ENCODE measurements at regions of chr1 and their contacts with region 1.

Region 1: GRCh38 chr1:160328184-160328583 is 14.9 kb downstream of the COPA start:
- DNase-seq: no peak
- H3K4me3 Mint-ChIP-seq: no peak overlapping the region
- H3K27ac Mint-ChIP-seq: no peak overlapping the region
- H3K4me1 Mint-ChIP-seq: no peaks in the 10 kb centered on the region
- H3K27me3 Mint-ChIP-seq: no peaks in the 10 kb centered on the region

Region 2: DNA sequence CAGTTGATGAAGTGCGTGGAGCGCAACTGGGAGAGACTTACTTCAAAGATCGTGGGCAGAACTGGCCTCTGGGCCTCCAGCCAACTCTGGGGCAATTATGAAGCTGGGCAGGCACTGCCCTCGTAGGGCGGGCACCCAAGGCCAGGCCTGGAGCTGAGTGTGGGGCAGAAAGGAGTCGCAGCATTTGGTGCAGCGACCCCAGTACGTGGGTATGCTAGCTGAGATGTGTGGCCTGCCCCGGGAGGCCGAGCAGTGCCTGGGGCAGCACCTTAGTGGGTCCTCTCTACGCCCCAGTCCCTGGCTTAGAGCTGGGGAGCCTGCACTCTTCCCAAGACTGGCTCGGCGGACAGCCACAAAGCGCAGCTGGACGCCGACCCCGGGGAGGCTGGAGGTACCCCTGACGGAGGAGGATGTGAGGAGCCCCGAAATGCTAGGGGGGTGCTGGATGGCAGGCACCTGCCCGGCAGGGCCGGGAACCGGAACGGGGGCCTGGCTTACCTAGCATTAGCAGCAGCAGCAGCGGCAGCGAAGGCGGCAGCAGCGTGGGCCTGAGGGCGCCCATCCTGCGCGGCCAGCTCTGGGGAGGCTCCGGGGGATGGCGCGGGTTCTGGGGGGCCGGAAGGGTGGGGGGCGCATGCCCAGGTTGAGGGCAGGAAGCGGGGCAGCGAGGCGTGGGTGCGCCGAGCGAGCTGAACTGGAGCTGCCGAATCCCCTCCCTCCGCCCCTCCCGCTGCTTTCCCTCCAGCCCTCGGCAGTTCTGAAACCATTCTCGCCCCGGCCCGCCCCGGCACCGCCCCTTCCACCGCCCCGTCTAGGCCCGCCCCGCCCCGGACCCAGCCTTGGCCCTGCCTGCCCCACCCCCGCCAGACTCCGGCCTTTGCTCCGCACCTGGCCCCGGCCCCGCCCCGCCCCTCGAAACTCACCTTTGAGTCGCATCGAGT is 230.0 kb before region 1 on chr1 and contains the start of gene IGSF8:
- intact Hi-C with region 1: no loop called
- DNase-seq: peak; percentile 96
- H3K4me3 Mint-ChIP-seq: peak within 1 kb of the TSS; percentile 89
- H3K27ac Mint-ChIP-seq: peak within 1 kb of the TSS; percentile 79
- H3K4me1 Mint-ChIP-seq: peaks cover 37% of the 10 kb centered on the region
- H3K27me3 Mint-ChIP-seq: no peaks in the 10 kb centered on the region
- total RNA-seq, gene IGSF8: 25.3 and 26.7 TPM in 2 replicates

Region 3: DNA sequence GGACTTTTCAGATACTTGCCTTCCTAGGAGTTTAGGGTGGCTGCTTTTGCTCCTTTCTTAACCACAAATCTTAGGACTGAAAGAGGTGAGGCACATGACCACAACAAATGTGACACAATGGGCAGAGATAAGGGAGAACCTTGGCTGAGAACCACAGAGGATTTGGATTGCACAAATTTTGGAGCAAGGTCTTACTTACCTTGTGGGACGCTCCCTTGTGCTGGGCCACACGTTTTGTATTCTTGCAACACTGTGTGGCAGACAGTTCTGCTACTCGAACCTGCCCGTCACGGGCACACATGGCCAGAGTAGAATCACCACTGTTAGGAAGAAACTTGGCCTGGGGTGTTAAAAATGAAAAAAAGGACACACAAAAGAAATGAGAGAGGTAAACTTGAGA is 89.8 kb before region 1 on chr1:
- intact Hi-C with region 1: no loop called
- DNase-seq: no peak
- H3K4me3 Mint-ChIP-seq: no peak overlapping the region
- H3K27ac Mint-ChIP-seq: peak overlapping the region; percentile 21
- H3K4me1 Mint-ChIP-seq: peaks cover 14% of the 10 kb centered on the region
- H3K27me3 Mint-ChIP-seq: no peaks in the 10 kb centered on the region

Region 4: DNA sequence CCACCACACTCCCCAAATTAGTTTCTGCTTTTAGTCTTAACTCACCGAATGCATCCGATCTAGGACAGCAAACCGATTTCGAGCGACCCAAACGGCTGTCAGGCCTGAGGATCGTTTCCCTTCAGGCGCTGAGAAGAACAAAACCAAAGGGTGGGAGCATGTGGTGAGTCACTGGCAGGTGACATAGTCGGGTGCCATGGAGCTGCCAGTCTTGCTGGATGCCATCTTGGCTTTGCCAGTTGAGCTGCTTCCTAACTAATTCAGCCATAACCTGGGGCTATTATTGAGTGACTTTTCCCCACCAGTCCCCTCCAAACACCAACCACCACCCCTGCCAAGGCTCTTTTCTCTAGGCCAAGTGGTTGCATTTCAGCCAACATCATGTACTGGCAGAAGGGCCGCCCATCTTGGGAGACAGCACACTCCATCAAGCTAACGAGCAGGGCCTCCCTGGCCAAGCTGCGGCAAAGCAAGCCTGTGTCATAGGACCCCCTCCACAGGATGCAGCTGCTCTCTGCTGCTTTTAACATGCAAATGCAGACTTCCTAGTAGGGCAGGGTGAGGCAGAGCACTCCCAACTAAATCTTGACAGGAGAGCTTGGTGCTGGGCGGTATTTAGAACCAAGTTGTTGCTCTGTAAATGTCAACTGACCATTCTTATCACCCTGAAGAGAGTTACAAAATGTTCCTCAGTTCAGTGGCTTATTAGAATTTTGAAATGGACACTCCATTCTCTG is 20.9 kb before region 1 on chr1:
- intact Hi-C with region 1: loop called (anchors 2 kb)
- DNase-seq: no peak
- H3K4me3 Mint-ChIP-seq: no peak overlapping the region
- H3K27ac Mint-ChIP-seq: no peak overlapping the region
- H3K4me1 Mint-ChIP-seq: peaks cover 2% of the 10 kb centered on the region
- H3K27me3 Mint-ChIP-seq: no peaks in the 10 kb centered on the region